ENCODE measurements at regions of chr1 and their contacts with region 1.

Region 1: GRCh38 chr1:42035830-42036604 is 117.2 kb upstream of the GUCA2B start:
- DNase-seq: peak; percentile 98
- H3K4me3 ChIP-seq: peak overlapping the region; percentile 77 to 93 (median 84)
- H3K27ac ChIP-seq: peak overlapping the region; percentile 73 to 79 (median 76)
- H3K4me1 ChIP-seq: peaks cover 13 to 16% (median 16%) of the 10 kb centered on the region in 4 donors
- H3K27me3 ChIP-seq: no peaks in the 10 kb centered on the region
- CTCF ChIP-seq: peak in 1 of 3 experiments; percentile 0
- EP300 ChIP-seq: no peak
- POLR2A ChIP-seq: no peak

Region 2: GRCh38 chr1:41919764-41920397 is 116.1 kb before region 1 on chr1:
- intact Hi-C with region 1: loop called (anchors 10 kb)
- DNase-seq: no peak
- H3K4me3 ChIP-seq: peak overlapping the region in 1 of 4 donors; percentile 33
- H3K27ac ChIP-seq: no peak overlapping the region
- H3K4me1 ChIP-seq: peaks cover 21 to 46% (median 37%) of the 10 kb centered on the region in 4 donors
- H3K27me3 ChIP-seq: no peaks in the 10 kb centered on the region
- CTCF ChIP-seq: no peak
- EP300 ChIP-seq: no peak
- POLR2A ChIP-seq: no peak

Region 3: DNA sequence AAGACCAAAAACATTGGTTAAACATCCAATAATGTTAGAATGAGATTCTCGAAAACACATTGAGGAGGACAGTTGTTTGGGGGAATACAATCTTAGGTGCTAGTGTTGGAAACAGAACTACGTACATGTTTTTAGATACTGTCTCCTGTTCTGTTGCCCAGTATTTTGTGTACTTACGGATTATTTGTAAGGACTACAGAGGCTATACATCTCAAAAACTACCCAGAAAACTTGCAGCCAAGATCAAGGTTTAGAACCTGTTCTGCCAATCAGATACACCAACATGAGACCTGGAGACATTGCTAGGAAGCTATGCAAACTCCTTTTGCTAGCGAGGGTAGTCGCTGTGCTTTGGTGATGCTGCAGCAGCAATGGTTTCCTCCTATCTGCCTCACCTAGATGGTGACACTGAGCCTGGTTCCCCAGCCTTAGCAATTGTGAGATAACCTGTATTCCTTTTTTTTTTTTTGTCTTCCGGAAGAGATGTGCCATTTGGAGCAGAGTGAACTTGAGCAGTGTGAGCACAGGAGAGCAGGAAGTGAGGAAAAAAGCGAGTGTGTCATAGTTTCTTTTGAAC is 668.0 kb after region 1 on chr1:
- intact Hi-C with region 1: no loop called
- DNase-seq: no peak
- H3K4me3 ChIP-seq: no peak overlapping the region
- H3K27ac ChIP-seq: no peak overlapping the region
- H3K4me1 ChIP-seq: no peaks in the 10 kb centered on the region
- H3K27me3 ChIP-seq: no peaks in the 10 kb centered on the region
- CTCF ChIP-seq: no peak
- EP300 ChIP-seq: no peak
- POLR2A ChIP-seq: no peak

Measured in esophagus muscularis mucosa (tissue), 4 donors.